Lower lobe of right lung (tissue), 2 donors: ENCODE measurements at regions of chr17 and their contacts with region 1.

Region 1: GRCh38 chr17:42760652-42761581 is at the start of gene RAMP2:
- DNase-seq: no peak
- ATAC-seq: peak; percentile 51 to 57
- H3K4me3 ChIP-seq: peak within 1 kb of the TSS; percentile 68
- H3K27ac ChIP-seq: peak within 1 kb of the TSS; percentile 83
- H3K4me1 ChIP-seq: peaks cover 19% of the 10 kb centered on the region
- H3K27me3 ChIP-seq: peaks cover 15% of the 10 kb centered on the region
- CTCF ChIP-seq: no peak
- total RNA-seq, gene RAMP2: 127 TPM

Region 2: GRCh38 chr17:42294469-42295398 is 466.2 kb before region 1 on chr17:
- intact Hi-C with region 1: no loop called
- DNase-seq: no peak
- ATAC-seq: peak in 1 of 2 donors; percentile 18
- H3K4me3 ChIP-seq: no peak overlapping the region
- H3K27ac ChIP-seq: no peak overlapping the region
- H3K4me1 ChIP-seq: peaks cover 4% of the 10 kb centered on the region
- H3K27me3 ChIP-seq: no peaks in the 10 kb centered on the region
- CTCF ChIP-seq: no peak

Region 3: DNA sequence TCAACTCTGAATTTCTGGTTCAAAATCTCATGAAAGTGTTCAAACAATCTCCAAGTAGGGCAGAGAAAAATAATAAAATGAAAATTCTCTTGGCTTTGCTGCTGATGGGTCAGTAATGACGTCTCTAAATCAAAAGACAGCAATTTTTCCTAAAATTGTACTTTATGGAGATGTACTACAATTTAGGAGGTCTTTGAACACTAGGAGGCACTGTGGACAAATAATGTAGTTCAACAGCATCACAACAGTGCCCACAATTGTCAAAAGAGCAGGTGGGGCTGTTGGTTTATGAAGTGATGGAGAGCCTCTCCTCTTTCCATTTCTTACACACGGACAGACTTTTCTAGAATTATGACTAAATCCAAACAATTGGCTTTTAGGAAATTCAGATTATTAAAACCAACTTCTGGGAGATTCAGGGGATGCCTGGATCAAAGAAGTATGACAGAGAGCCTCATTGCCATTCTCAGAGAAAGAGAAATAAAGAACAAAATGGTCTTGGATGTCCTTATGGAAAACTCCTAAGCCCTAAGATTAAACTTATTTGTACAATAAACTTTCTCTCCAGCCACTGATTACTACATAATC is 39.8 kb before region 1 on chr17:
- intact Hi-C with region 1: loop called (anchors 5 kb)
- DNase-seq: no peak
- ATAC-seq: peak; percentile 76 to 86
- H3K4me3 ChIP-seq: no peak overlapping the region
- H3K27ac ChIP-seq: no peak overlapping the region
- H3K4me1 ChIP-seq: no peaks in the 10 kb centered on the region
- H3K27me3 ChIP-seq: no peaks in the 10 kb centered on the region
- CTCF ChIP-seq: peak; percentile 72